ENCODE measurements at regions of chr2 and their contacts with region 1.

Region 1: DNA sequence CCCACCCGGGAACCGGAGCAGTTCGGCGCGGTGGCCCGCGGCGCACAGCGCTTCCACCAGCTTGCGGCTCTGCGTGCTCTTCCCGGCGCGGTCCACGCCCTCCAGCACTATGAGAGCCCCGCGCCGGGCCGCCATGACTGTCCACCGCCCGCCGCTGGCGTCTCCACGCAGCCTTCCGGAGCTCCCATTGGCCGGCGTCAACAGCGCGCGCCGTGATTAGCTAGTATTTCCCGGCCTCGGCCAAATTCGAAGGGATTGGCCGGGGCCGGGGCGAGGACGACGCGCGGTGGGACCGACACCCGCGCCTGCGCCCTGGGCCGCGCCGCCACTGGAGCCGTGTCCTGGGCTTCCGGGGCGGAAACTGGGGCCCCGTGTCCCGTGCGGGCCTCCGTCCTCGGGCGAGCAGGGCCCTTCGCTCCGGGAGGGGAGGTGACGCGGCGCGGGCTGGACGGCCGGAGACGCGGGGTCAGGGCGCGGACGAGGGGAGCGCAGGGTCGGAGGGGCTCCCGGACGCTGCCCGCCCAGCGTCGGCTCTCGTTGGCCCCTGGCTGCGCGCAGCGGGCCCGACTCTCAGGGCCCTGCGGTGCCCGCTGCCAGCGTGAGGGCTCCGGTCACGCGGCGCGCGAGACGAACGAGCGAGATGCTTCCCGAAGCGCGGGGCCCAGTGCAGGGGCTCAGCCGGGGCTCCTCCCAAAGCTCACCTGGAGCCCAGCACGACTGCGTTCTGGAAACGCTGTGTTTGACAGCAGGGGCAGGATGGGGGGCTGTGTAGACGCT is at the start of gene DTYMK:
- DNase-seq: peak; percentile 92 to 99 (median 96)

Region 2: DNA sequence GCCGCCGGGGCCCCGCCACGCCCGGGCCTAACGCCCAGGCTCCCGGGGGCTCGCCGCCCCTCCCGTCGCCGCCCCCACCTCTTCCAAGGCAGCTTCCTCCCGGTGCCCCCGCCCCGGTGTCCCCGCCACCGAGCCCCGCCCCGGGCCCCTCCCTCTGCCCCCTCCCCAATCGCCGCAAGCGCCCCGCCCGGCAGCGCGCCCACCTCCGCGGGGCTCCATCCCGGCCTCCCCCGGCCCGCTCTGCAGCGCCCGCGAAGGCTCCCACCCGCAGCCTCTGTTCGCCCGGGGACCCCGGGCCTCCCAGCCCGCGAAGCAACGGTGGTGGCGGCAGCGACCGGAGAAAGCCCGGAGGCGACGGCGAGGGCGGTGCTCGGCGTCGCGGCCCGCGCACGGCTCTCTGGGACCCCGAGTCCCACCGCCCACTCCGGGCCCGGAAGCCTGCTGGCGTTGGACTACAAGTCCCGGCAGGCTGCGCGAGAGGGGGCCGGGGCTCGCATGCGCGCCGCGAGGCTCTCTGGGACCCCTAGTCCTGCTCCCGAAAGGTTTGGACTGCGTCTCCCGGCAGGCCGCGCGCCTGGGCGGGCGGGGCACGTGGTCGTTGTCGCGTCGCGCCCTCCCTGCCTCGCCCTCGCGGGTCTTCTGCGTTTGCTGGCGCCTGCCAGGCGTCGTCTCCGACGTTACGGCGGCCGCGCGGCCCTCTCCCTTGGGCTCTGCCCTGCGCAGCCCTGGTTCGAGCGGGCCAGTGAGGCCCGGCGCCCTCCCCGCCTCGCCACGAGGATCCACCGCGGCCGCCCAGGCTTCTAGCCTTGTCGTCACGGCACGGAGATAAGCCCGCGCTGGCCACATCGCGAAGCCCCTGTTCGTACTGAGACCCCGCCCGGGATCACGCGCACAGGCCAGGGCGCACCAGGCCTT is 178.3 kb before region 1 on chr2 and contains the start of gene STK25:
- intact Hi-C with region 1: loop called (anchors 5 kb)
- DNase-seq: peak; percentile 96 to 100 (median 98)

Region 3: DNA sequence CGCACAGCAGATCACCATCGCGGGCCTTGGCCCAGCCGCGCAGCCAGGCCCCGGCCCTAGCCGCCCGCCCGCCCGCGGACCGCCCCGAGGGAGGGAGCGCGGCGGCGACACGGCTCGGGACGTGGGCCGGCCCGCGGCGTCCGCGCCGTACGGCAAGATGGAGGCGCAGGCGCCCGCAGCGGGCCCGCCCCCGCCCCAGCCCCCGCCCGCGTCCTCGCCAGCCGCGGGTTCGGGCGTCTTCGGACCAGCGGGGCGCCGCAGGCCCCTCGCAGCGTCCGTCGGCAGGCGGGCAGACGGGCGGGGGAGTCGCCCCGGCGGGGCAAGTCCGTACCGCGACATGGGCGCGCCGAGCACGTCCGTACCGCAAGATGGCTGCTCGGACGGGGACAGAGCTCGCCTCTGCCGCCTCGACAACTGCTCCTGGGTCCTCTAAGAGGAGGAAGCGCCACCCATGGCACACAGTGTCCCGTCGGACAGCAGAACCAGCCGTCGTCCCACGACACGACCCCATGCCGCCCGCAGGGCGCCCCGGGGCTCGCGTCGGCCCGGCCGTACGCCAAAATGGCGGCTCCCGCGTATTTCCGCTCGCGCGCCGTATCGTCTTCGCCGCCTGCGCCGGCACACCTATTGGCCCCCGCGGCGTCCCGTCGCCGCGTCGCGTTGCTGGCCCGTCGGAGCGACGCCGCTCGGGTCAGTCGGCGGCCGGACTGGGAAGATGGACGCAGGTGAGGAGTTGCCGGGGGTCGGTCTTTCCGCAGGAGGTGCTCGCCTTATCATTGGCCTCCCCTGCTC is 49.6 kb before region 1 on chr2 and contains the starts of genes ATG4B and THAP4:
- intact Hi-C with region 1: loop called (anchors 2 kb)
- DNase-seq: peak; percentile 77 to 97 (median 82)

Region 4: DNA sequence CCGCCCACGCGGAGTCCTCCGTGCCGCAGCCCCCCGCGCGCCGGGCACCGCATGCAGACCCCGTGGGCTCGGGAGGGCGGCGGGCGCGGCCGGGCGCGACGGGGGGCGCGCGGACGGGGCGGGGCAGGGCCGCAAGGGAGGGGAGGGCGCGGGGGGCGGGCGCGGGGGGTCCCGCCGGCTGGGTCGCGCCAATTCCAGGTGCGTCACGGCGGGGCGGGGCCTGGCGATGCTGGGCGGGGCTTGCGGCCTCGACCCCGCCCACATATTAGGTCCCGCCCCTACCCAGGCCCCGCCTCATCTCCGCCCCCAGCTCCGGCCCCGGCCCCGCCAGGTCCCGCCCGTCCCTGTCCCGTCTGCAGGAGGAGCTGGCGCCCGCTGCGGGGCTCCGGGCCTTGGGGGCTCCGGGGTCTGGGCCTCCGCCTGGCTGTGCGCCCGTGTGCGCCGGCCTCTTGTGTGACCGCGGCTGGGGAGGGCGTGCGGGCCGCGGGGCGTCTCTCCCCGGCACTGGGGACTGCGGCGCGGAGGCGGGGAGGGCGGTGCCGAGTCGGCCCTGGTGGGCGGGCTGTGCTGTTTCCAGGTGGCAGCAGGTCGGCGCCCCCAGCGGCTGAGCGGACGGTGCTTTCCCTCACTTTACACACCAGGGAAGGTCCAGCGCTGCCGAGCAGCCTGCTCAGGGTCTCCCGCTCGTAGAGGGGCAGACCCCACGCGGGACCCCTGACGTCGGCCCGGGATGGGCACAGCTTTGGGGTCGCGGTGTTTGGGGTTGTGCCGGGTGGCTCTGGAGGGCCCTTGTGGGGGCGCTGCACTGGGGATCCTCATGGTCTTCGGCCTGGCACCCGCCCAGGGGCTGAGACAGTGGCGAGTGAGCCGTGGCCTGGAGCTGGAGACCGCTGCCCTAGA is 15.5 kb after region 1 on chr2:
- intact Hi-C with region 1: loop called (anchors 1 kb)
- DNase-seq: peak; percentile 72 to 99 (median 88)

Region 5: GRCh38 chr2:241734467-241735208 is 47.8 kb after region 1 on chr2 and contains the start of gene D2HGDH:
- intact Hi-C with region 1: loop called (anchors 5 kb)
- DNase-seq: peak; percentile 86 to 98 (median 92)

Measured in posterior cingulate gyrus (tissue), 11 donors.